Sigmoid colon (tissue), 7 donors: ENCODE measurements at regions of chr10 and their contacts with region 1.

Region 1: GRCh38 chr10:112949875-112950507 is at the start of gene TCF7L2:
- DNase-seq: peak; percentile 98
- H3K4me3 ChIP-seq: peak within 1 kb of the TSS; percentile 70 to 91 (median 90)
- H3K27ac ChIP-seq: peak within 1 kb of the TSS; percentile 87 to 97 (median 96)
- H3K4me1 ChIP-seq: peaks cover 0 to 38% (median 30%) of the 10 kb centered on the region in 4 donors
- H3K27me3 ChIP-seq: no peaks in the 10 kb centered on the region
- CTCF ChIP-seq: no peak
- EP300 ChIP-seq: no peak
- POLR2A ChIP-seq: peak; percentile 38 to 68
- total RNA-seq, gene TCF7L2: 15.3 to 40.4 (median 23.3) TPM

Region 2: GRCh38 chr10:112996462-112996861 is 46.5 kb after region 1 on chr10:
- intact Hi-C with region 1: loop called (anchors 5 kb)
- DNase-seq: no peak
- H3K4me3 ChIP-seq: no peak overlapping the region
- H3K27ac ChIP-seq: no peak overlapping the region
- H3K4me1 ChIP-seq: peaks cover 0 to 55% (median 51%) of the 10 kb centered on the region in 4 donors
- H3K27me3 ChIP-seq: no peaks in the 10 kb centered on the region
- CTCF ChIP-seq: no peak
- EP300 ChIP-seq: no peak
- POLR2A ChIP-seq: no peak

Region 3: DNA sequence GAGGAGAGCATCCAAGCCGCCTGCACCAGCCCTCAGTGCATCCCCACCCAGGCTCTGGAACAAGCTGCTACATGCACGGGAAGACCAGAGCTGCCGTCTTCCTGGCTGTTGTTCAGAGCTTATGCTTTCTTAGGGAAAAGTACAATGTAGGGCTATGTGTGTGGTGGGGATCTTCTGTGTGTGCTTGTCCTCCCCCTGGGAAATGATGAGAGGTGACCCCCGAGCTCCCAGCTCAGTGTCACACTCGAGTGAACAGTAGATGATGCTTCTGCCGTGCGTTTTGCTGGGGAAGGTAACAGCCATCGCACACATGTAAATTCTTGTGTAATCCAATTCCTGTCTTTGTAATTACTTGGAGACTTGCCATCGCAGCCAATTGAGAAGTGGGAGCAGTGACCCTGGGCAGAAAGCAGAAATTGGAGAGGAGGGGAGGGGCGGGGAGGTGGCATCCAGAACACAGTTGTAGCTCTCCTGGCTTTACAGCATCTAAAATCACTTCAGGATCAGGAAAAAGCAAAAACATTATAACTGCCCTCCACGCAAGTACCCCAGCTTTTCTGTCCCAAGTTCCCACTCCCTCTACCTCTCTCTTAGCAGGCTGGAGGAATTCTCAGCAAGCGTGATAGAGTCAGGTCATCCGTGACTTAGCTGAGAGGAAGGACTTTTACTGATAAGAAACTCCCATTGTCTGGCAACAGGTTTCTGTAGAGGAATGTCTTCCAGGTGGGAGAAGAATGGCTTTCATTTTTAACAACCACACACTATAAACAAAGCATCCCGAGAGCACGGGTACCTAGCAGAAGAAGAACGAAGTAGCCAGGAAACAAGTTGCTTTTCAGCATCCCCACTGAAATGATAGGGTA is 149.7 kb after region 1 on chr10:
- intact Hi-C with region 1: loop called (anchors 5 kb)
- DNase-seq: no peak
- H3K4me3 ChIP-seq: no peak overlapping the region
- H3K27ac ChIP-seq: peak overlapping the region in 1 of 4 donors; percentile 23
- H3K4me1 ChIP-seq: peaks cover 0 to 67% (median 65%) of the 10 kb centered on the region in 4 donors
- H3K27me3 ChIP-seq: no peaks in the 10 kb centered on the region
- CTCF ChIP-seq: no peak
- EP300 ChIP-seq: no peak
- POLR2A ChIP-seq: no peak

Region 4: DNA sequence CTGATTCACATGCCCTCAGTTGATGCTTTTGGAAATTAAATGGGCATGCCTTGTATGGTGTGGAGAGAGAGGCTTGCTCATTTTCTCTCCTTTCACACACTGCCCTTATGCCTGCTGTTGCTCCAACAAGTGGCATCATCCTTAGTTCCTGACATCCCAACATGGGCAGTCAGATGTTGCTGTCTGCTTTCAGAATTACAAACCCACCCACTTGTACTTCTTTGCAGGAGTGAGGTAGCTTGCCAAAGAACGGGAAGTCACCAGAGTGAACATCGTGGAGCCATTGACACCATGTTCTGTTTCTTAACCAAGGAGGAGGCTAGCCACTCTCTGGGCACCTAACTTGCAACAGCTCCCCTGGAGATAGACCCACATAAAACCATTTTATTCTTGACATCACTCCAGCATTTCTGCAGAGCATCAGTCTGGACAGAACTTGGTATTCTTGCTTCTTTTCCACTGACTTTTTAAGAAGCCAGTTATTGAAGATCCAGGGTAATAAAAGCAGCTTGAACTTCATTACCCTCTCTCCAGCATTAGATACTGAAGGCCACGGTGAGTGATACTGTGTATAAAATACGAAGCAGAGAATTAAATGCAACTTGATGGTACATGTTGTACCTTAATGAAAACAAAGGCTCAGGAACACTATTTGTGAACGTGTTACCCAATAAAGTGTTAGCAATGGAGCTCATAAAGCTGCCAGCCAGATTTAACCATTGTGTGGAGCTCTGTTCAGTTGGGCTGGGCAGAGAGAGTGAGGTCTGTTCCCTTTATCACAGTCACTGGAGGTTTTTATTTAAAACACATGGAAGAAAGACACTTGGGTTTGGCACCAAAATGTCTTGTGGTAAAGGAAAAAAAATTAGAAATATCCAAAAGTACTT is 407.0 kb after region 1 on chr10:
- intact Hi-C with region 1: loop called (anchors 2 kb)
- DNase-seq: peak; percentile 90
- H3K4me3 ChIP-seq: no peak overlapping the region
- H3K27ac ChIP-seq: peak overlapping the region in 3 of 4 donors; percentile 46 to 75 (median 71)
- H3K4me1 ChIP-seq: peaks cover 3 to 30% (median 26%) of the 10 kb centered on the region in 4 donors
- H3K27me3 ChIP-seq: no peaks in the 10 kb centered on the region
- CTCF ChIP-seq: no peak
- EP300 ChIP-seq: peak in 3 of 4 donors; percentile 66 to 95 (median 89)
- POLR2A ChIP-seq: no peak